ENCODE measurements at regions of chr12 and their contacts with region 1.

Region 1: GRCh38 chr12:98373025-98373554 is 142.3 kb upstream of the TMPO start:
- DNase-seq: peak; percentile 67
- H3K4me3 Mint-ChIP-seq: no peak overlapping the region
- H3K27ac Mint-ChIP-seq: no peak overlapping the region
- H3K4me1 Mint-ChIP-seq: peaks cover 28% of the 10 kb centered on the region
- H3K27me3 Mint-ChIP-seq: peaks cover 43% of the 10 kb centered on the region

Region 2: GRCh38 chr12:98085050-98085755 is 287.9 kb before region 1 on chr12:
- intact Hi-C with region 1: no loop called
- DNase-seq: no peak
- H3K4me3 Mint-ChIP-seq: no peak overlapping the region
- H3K27ac Mint-ChIP-seq: no peak overlapping the region
- H3K4me1 Mint-ChIP-seq: no peaks in the 10 kb centered on the region
- H3K27me3 Mint-ChIP-seq: no peaks in the 10 kb centered on the region

Region 3: GRCh38 chr12:98211909-98212695 is 161.0 kb before region 1 on chr12:
- intact Hi-C with region 1: no loop called
- DNase-seq: no peak
- H3K4me3 Mint-ChIP-seq: no peak overlapping the region
- H3K27ac Mint-ChIP-seq: no peak overlapping the region
- H3K4me1 Mint-ChIP-seq: no peaks in the 10 kb centered on the region
- H3K27me3 Mint-ChIP-seq: no peaks in the 10 kb centered on the region

Region 4: GRCh38 chr12:98227162-98227561 is 145.9 kb before region 1 on chr12:
- intact Hi-C with region 1: loop called (anchors 5 kb)
- DNase-seq: no peak
- H3K4me3 Mint-ChIP-seq: no peak overlapping the region
- H3K27ac Mint-ChIP-seq: no peak overlapping the region
- H3K4me1 Mint-ChIP-seq: no peaks in the 10 kb centered on the region
- H3K27me3 Mint-ChIP-seq: peaks cover 3% of the 10 kb centered on the region

Region 5: DNA sequence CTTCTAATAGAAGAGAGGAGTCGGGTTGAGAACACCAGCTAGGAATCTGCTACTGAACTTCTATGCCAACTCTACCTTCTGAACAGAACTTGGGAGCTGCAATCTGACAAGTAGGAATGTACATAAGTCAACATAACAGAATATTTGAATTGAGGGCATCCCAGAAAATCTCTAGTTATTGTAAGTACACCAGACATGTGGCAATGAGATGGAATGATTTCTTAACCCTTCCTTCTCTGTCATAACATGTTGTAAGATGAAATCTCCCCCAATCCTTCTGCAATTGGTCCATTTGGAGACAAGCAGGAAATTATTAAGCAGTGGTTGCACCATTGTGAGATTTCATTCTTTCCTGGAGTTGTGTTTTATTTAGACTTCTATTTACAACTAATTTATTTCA is 73.6 kb after region 1 on chr12:
- intact Hi-C with region 1: no loop called
- DNase-seq: no peak
- H3K4me3 Mint-ChIP-seq: no peak overlapping the region
- H3K27ac Mint-ChIP-seq: no peak overlapping the region
- H3K4me1 Mint-ChIP-seq: no peaks in the 10 kb centered on the region
- H3K27me3 Mint-ChIP-seq: peaks cover 23% of the 10 kb centered on the region

Measured in activated CD4-positive, alpha-beta T cell treated with anti-CD3 and anti-CD28 coated beads, Interleukin-2, amount 10 ng/mL, durations not matched to agents 24 days and 14 days (primary cell).